ENCODE measurements at regions of chr9 and their contacts with region 1.

Region 1: DNA sequence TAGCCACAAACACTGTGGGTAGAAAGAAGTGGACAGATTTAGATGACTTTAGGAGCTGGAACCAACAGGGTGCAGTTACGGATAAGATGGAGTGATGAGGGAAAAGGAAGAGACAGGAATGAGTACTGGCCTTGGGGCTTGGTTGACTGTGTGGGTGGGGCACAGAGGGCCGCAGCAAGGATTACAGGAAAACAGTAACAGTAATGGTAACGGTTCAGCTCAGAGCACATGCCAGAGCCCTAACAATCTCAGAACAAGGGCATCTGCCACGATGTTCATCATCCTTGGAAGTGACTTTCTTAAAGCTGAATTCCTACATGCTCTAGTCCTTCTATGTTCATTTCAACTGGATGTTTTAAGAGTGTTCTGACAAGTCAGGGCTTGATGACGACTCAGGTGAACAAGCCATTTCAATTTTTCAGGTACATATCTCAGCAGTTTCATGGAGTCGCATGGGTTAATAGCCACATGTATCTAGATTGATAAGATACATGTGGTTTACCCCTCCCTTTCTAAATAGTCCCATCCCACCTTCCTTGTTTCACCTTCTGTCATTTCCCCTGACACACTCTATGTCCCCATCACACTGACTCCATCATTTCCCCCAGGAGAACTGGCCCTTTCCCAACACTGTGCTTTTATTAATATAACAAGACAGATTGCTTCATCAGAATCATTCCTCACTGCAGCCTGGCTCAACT is 65.0 kb downstream of the CEMIP2 start:
- DNase-seq: no peak
- ATAC-seq: no peak
- H3K4me3 ChIP-seq: no peak overlapping the region
- H3K27ac ChIP-seq: no peak overlapping the region
- H3K4me1 ChIP-seq: no peaks in the 10 kb centered on the region
- H3K27me3 ChIP-seq: no peaks in the 10 kb centered on the region
- CTCF ChIP-seq: no peak
- EP300 ChIP-seq: no peak
- POLR2A ChIP-seq: no peak
- RAD21 ChIP-seq: no peak

Region 2: GRCh38 chr9:71716138-71716909 is 13.0 kb after region 1 on chr9:
- CTCF ChIA-PET with region 1: interaction called, 10 read pairs
- POLR2A ChIA-PET with region 1: no interaction called
- RAD21 ChIA-PET with region 1: no interaction called
- SMC1A ChIA-PET with region 1: interaction called, 9 read pairs
- in situ Hi-C with region 1: no loop called
- intact Hi-C with region 1: no loop called
- DNase-seq: no peak
- ATAC-seq: no peak
- H3K4me3 ChIP-seq: no peak overlapping the region
- H3K27ac ChIP-seq: no peak overlapping the region
- H3K4me1 ChIP-seq: no peaks in the 10 kb centered on the region
- H3K27me3 ChIP-seq: no peaks in the 10 kb centered on the region
- CTCF ChIP-seq: peak in 2 of 3 experiments; percentile 17 to 25; a peak in 3 of 6 replicates
- EP300 ChIP-seq: no peak
- POLR2A ChIP-seq: no peak
- RAD21 ChIP-seq: no peak

Region 3: GRCh38 chr9:71726723-71727122 is 23.4 kb after region 1 on chr9:
- CTCF ChIA-PET with region 1: no interaction called
- POLR2A ChIA-PET with region 1: no interaction called
- RAD21 ChIA-PET with region 1: no interaction called
- SMC1A ChIA-PET with region 1: no interaction called
- in situ Hi-C with region 1: no loop called
- intact Hi-C with region 1: no loop called
- DNase-seq: no peak
- ATAC-seq: no peak
- H3K4me3 ChIP-seq: no peak overlapping the region
- H3K27ac ChIP-seq: no peak overlapping the region
- H3K4me1 ChIP-seq: no peaks in the 10 kb centered on the region
- H3K27me3 ChIP-seq: no peaks in the 10 kb centered on the region
- CTCF ChIP-seq: no peak
- EP300 ChIP-seq: no peak
- POLR2A ChIP-seq: no peak
- RAD21 ChIP-seq: no peak

Region 4: DNA sequence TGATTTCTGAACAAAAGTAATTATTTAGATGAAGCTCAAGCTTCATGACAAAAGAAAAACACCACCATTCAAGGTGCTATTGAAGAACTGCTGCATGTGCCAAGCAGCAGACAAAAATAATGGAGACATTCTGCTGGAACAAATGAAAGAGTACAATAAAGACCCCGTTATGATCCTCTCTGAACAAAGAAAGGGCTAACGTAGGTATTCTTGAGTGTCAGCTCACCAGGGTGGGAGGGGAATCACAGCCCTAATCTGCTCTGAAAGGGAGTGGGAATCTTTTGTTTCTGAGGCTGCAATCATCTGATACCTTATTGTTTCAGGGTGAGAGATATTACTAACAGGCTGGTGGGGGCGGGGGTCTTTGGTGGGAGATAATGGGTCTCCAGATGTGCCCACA is 49.6 kb after region 1 on chr9:
- CTCF ChIA-PET with region 1: no interaction called
- POLR2A ChIA-PET with region 1: no interaction called
- RAD21 ChIA-PET with region 1: no interaction called
- SMC1A ChIA-PET with region 1: no interaction called
- in situ Hi-C with region 1: loop called (anchors 5 kb)
- intact Hi-C with region 1: no loop called
- DNase-seq: no peak
- ATAC-seq: no peak
- H3K4me3 ChIP-seq: no peak overlapping the region
- H3K27ac ChIP-seq: no peak overlapping the region
- H3K4me1 ChIP-seq: no peaks in the 10 kb centered on the region
- H3K27me3 ChIP-seq: no peaks in the 10 kb centered on the region
- CTCF ChIP-seq: no peak
- EP300 ChIP-seq: no peak
- POLR2A ChIP-seq: no peak
- RAD21 ChIP-seq: no peak